ENCODE measurements at regions of chr20 and their contacts with region 1.

Region 1: DNA sequence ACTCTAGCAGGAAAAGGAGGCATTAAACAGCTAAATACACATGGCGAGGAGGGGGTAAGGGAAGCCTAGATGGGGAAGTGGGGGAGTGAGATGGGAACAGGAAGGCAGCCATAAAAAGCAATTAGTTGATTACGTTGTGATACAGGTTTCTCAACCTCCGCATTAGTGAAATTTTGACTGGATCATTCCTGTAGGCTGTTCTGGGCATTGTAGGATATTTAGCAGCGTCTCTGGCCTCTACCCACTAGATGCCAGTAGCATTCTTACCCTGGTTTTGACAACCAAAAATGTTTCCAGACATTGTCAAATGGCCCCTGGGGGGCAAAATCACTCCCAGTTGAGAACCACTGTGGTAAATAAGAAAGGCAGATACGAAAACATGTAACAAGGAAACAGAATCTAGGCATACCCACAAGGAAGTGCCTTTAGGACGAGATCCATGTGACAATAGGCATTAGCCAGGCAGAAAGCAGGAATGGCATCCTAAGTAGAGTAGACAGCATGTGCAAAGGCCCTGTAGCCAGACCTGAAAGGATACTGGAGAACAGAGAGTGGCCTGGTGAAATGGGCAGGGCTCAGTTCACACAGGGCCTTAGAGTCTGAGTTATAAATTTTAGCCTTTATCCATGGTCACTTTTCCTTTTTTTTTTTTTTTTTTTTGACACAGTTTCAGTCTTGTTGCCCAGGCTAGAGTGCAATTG is 25.8 kb upstream of the PTPN1 start:
- DNase-seq: no peak

Region 2: GRCh38 chr20:50575847-50576720 is 91.7 kb after region 1 on chr20:
- intact Hi-C with region 1: loop called (anchors 5 kb)
- DNase-seq: no peak

Region 3: GRCh38 chr20:50731055-50731871 is 246.8 kb after region 1 on chr20 and contains the start of gene PARD6B:
- intact Hi-C with region 1: loop called in 1 of 2 experiments (anchors 10 kb)
- DNase-seq: peak; percentile 97
- total RNA-seq, gene PARD6B: 1.0 to 1.4 TPM

Region 4: DNA sequence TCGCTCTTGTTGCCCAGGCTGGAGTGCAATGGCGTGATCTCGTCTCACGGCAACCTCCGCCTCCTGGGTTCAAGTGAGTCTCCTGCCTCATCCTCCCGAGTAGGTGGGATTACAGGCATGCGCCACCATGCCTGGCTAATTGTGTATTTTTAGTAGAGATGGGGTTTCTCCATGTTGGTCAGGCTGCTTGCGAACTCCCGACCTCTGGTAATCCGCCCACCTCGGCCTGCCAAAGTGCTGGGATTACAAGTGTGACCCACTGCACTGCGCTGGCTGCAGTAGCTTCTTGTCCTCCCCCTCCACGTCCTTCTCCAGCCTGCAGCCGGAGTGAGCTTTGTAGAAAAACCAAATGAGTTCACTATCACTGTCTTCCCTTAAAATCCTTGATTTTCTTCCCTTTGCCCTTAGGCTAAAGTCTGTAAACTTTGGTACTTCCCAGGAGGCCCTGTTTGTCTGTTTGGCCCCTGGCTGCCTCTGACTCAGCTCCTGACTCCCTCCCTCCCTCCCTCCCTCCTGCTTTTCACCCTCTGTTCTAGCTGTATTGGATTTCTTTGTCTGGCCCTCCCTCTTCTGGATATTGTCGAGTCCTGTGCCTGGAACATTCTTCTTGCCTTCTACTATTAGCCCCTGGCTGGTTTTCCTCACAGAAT is 259.8 kb after region 1 on chr20:
- intact Hi-C with region 1: loop called (anchors 10 kb)
- DNase-seq: peak; percentile 87

Region 5: DNA sequence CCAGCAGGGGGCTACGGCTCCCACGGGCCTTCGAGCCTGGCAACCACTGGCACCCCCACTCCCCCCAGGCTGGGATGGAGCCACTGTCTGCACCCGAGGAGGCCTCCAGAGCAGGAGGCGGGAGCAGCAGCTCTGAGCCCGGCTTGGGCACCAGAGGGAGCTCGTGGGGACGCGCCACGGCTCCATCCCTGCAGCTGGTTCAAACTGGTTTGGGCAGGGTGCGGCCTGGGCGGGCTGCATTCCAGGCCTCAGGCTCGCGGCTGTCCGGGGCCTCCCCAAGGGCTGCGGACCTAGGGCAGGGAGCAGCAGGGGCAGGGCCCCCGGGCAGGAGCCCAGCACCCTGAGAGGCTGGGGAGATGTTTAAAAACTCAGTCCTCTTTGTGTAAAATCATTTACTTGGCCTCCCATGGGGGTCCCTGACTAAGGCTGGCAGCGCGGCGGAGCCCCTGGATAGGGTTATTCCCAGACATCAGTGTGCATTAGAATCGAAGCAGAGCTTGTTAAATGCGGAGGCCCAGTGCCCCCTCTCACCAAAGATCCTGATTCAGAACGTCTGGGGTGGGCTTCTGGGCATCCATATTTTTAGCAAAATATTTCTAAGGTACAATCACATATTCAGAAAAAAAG is 306.3 kb after region 1 on chr20:
- intact Hi-C with region 1: no loop called
- DNase-seq: peak; percentile 97